GM12878 (cell line): ENCODE measurements at regions of chr1 and their contacts with region 1.

Region 1: GRCh38 chr1:234978397-234979295 is 150.0 kb downstream of the TOMM20 start:
- DNase-seq: peak; percentile 94
- ATAC-seq: peak; percentile 66
- H3K4me3 ChIP-seq: peak overlapping the region; percentile 29
- H3K27ac ChIP-seq: peak overlapping the region; percentile 98
- H3K4me1 ChIP-seq: peaks cover 76% of the 10 kb centered on the region
- H3K27me3 ChIP-seq: no peaks in the 10 kb centered on the region
- CTCF ChIP-seq: peak in 2 of 3 experiments; percentile 13 to 16; a peak in 2 of 6 replicates
- EP300 ChIP-seq: peak; percentile 96 to 99
- POLR2A ChIP-seq: 0 out of 2 replicates have a peak, but pooled peaks have one; percentile 56
- RAD21 ChIP-seq: peak; percentile 44

Region 2: DNA sequence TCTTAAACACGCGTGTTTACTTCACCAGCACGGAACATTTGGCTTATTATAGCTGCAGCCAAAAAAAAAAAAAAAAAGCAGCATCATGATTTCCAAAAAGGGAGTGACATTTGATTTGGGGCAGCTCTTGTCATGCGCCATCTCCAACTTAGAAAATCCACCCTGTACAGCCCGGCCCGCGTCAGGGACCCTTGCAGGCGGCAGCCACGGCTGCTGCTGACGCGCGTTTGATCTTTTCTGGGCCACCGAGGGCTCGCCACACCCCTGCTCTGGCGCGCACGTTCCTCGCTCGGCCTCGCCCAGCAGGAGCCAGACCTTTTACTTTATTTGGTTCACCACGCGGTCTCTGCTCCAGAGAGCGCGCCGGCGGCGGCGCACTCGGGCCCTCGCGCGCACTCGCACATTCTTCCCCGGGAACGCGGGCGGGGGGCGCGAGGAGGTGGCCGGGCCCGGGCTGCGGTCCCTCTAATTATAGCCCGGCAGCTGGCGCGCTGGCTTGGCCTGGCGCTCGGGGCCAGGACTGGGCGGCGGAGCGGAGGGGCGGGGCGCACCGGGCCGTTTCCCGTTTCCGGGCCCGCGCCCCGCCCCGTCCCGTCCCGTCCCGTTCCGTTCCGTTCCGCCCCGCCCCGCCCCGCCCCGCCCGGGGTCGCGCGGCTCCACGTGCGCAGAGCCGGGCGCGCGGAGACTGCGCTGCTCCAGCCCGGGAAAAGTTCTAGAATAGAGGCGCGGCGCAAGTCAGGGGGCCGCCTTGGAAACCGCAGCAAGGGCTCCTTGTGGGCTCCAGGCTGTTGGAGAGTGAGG is 378.8 kb before region 1 on chr1:
- CTCF ChIA-PET with region 1: interaction called, 4 read pairs
- POLR2A ChIA-PET with region 1: interaction called, 6 read pairs
- RAD21 ChIA-PET with region 1: interaction called, 13 read pairs
- SMC1A ChIA-PET with region 1: interaction called, 20 read pairs
- in situ Hi-C with region 1: loop called (anchors 10 kb)
- intact Hi-C with region 1: loop called (anchors 5 kb)
- DNase-seq: no peak
- ATAC-seq: peak; percentile 76
- H3K4me3 ChIP-seq: peak overlapping the region; percentile 67; the same call in 1 of the 2 replicates
- H3K27ac ChIP-seq: peak overlapping the region; percentile 75
- H3K4me1 ChIP-seq: peaks cover 22% of the 10 kb centered on the region
- H3K27me3 ChIP-seq: no peaks in the 10 kb centered on the region
- CTCF ChIP-seq: 0 out of 6 replicates have a peak, but pooled peaks of 1 of the 3 experiments have one; percentile 5
- EP300 ChIP-seq: 0 out of 4 replicates have a peak, but pooled peaks of 1 of the 2 experiments have one; percentile 42
- POLR2A ChIP-seq: peak; percentile 70; the same call in 1 of the 2 replicates
- RAD21 ChIP-seq: no peak

Region 3: DNA sequence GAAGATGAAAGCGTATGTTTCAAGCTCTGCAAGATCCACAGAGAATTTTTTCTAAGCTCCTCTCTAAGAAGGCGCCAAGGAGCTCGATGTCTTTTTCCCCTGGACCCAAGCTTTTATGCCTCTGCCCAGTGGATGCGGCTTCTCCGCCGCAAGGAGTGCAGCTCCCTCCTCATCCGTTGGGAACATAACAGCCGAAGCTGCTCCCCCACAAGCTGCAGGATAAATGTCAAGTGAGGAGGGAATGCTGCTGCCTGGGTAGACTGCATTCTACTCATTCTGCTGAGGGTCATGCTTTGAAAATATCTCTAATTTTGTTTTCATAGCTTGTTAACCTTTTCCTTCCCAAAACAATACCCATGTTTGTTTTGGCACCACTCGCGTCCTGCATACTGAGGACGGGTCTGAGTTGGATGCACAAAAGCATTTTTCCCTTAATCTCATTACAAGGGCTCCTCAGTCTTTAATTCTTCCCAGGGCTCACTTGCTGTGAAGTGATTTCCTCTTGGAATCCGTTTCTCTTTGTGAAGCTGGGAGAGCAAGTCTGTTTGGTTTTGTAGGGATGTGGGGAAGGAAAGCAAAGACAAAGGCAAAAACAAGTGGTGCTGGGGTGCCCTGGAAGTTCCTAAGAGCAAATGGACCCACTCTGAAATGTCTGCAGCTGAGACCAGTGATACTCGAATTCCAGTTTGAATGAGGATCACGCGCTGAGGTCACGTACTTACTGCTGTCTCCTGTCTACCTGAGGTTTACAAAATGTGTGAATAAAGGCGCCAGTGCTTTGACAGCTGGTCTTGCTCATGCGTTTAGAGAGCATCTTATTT is 234.6 kb before region 1 on chr1:
- CTCF ChIA-PET with region 1: no interaction called
- POLR2A ChIA-PET with region 1: no interaction called
- RAD21 ChIA-PET with region 1: no interaction called
- SMC1A ChIA-PET with region 1: no interaction called
- in situ Hi-C with region 1: no loop called
- intact Hi-C with region 1: no loop called
- DNase-seq: no peak
- ATAC-seq: no peak
- H3K4me3 ChIP-seq: no peak overlapping the region
- H3K27ac ChIP-seq: no peak overlapping the region
- H3K4me1 ChIP-seq: no peaks in the 10 kb centered on the region
- H3K27me3 ChIP-seq: no peaks in the 10 kb centered on the region
- CTCF ChIP-seq: no peak
- EP300 ChIP-seq: no peak
- POLR2A ChIP-seq: no peak
- RAD21 ChIP-seq: no peak

Region 4: GRCh38 chr1:234925440-234926263 is 53.0 kb before region 1 on chr1:
- CTCF ChIA-PET with region 1: interaction called, 3 read pairs
- POLR2A ChIA-PET with region 1: interaction called, 3 read pairs
- RAD21 ChIA-PET with region 1: interaction called, 9 read pairs
- SMC1A ChIA-PET with region 1: interaction called, 26 read pairs
- in situ Hi-C with region 1: no loop called
- intact Hi-C with region 1: loop called (anchors 2 kb)
- DNase-seq: peak; percentile 40
- ATAC-seq: peak; percentile 1
- H3K4me3 ChIP-seq: peak overlapping the region; percentile 40; the same call in 1 of the 2 replicates
- H3K27ac ChIP-seq: peak overlapping the region; percentile 95
- H3K4me1 ChIP-seq: peaks cover 48% of the 10 kb centered on the region
- H3K27me3 ChIP-seq: no peaks in the 10 kb centered on the region
- CTCF ChIP-seq: no peak
- EP300 ChIP-seq: no peak; a peak in 1 of 4 replicates
- POLR2A ChIP-seq: no peak
- RAD21 ChIP-seq: no peak

Region 5: GRCh38 chr1:235018161-235018560 is 39.5 kb after region 1 on chr1:
- CTCF ChIA-PET with region 1: interaction called, 4 read pairs
- POLR2A ChIA-PET with region 1: interaction called, 23 read pairs
- RAD21 ChIA-PET with region 1: interaction called, 257 read pairs
- SMC1A ChIA-PET with region 1: interaction called, 229 read pairs
- in situ Hi-C with region 1: loop called (anchors 5 kb)
- intact Hi-C with region 1: no loop called
- DNase-seq: no peak
- ATAC-seq: no peak
- H3K4me3 ChIP-seq: no peak overlapping the region
- H3K27ac ChIP-seq: peak overlapping the region; percentile 24; the same call in 1 of the 2 replicates
- H3K4me1 ChIP-seq: peaks cover 63% of the 10 kb centered on the region
- H3K27me3 ChIP-seq: no peaks in the 10 kb centered on the region
- CTCF ChIP-seq: no peak
- EP300 ChIP-seq: no peak
- POLR2A ChIP-seq: no peak
- RAD21 ChIP-seq: no peak